Caco-2 (cell line): ENCODE measurements at regions of chr6 and their contacts with region 1.

Region 1: DNA sequence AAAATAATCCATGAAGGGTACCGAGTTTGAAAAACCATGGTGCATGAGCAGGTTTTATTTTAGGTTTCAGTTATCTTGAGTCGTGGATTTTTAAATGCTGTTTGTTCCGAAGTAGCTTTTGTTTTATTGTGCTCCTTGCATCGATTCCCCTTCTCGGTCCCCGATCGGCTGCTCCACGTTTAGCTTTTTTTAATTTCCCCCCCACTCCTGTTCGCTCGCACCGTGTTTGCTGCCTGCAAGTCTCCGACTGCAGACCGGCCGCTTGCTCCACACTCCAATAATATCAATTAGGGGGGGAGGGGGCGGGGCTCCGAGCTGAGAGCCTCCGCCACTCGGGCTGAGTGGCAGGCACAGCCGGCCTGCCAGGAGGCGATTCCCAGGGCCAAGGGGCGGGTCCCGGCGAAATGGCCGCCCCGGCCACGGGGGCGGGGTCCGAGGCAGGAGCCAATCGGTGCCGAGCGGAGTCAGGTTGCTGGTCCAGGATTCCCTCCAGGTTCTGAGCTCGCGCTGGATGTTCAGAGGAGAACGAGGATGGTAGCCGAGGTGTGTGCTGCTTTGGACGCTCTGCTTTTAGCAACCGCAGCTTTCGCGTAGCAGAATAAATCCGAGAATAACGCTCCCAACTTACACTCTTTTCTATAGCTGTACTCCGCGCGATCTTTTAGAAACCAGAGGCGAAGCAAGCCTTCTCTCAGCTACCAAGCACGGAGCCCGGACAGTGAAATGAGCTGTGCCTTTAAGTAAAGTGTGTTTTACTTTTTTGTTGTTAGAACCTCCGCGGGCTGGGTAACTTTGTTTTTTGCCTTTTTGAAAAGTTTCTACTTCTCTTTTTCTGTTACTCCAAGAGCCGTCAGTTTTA is at the start of gene EPHA7:
- DNase-seq: peak; percentile 87 to 91
- H3K4me3 ChIP-seq: peak within 1 kb of the TSS; percentile 30
- H3K4me3 Mint-ChIP-seq: peak within 1 kb of the TSS; percentile 72
- H3K27ac Mint-ChIP-seq: no peak within 1 kb of the TSS
- H3K4me1 ChIP-seq: peaks cover 18% of the 10 kb centered on the region
- H3K4me1 Mint-ChIP-seq: peaks cover 7% of the 10 kb centered on the region
- H3K27me3 ChIP-seq: peaks cover 3% of the 10 kb centered on the region
- H3K27me3 Mint-ChIP-seq: peaks cover 15% of the 10 kb centered on the region
- CTCF ChIP-seq: no peak
- total RNA-seq, gene EPHA7: not detected in 2 replicates

Region 2: DNA sequence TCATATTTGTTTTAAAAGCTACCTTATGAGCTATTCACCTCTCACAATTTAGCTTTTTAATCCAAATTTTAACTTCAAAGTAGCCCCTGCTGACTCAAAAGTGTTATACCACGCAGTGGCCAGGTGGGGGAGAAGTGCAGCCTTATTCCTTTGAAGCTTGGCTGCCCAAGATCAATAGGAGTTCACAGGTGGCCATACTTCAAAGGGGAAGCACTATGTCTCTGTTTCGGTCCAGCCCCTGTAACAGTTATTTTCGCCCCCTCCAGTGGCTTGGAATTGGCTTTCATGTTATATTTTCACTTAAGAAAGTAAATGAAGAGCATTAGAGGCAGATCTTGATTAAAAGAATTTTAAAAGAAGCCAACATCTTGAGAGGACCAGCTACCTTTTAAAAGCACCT is 608.6 kb before region 1 on chr6:
- CTCF ChIA-PET with region 1: interaction called, 4 read pairs
- POLR2A ChIA-PET with region 1: no interaction called
- intact Hi-C with region 1: loop called (anchors 1 kb)
- DNase-seq: peak; percentile 39 to 59
- H3K4me3 ChIP-seq: no peak overlapping the region
- H3K4me3 Mint-ChIP-seq: no peak overlapping the region
- H3K27ac Mint-ChIP-seq: no peak overlapping the region
- H3K4me1 ChIP-seq: no peaks in the 10 kb centered on the region
- H3K4me1 Mint-ChIP-seq: no peaks in the 10 kb centered on the region
- H3K27me3 ChIP-seq: no peaks in the 10 kb centered on the region
- H3K27me3 Mint-ChIP-seq: no peaks in the 10 kb centered on the region
- CTCF ChIP-seq: peak; percentile 50 to 53

Region 3: DNA sequence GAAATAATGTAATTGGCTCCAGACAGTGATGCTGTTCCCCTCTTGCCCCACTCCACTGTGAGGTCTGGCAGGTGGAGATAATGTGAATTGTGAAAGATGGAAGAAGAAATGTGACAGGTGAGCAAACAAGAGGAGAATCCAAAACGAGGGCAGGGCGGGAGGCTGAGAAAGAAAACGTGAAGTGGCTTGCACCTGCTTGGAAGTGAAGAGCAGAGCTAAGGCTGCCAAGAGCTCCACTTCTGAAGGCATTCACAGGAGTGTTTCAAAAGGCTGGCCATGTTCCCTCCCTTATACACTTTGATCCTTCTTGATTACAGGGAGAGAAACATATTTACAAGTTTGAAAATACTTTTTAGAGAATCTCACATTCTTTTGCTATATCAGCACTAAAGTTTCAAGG is 359.6 kb before region 1 on chr6:
- CTCF ChIA-PET with region 1: no interaction called
- POLR2A ChIA-PET with region 1: no interaction called
- intact Hi-C with region 1: loop called (anchors 10 kb)
- DNase-seq: no peak
- H3K4me3 ChIP-seq: no peak overlapping the region
- H3K4me3 Mint-ChIP-seq: no peak overlapping the region
- H3K27ac Mint-ChIP-seq: no peak overlapping the region
- H3K4me1 ChIP-seq: no peaks in the 10 kb centered on the region
- H3K4me1 Mint-ChIP-seq: no peaks in the 10 kb centered on the region
- H3K27me3 ChIP-seq: no peaks in the 10 kb centered on the region
- H3K27me3 Mint-ChIP-seq: peaks cover 5% of the 10 kb centered on the region
- CTCF ChIP-seq: no peak

Region 4: GRCh38 chr6:93366506-93366905 is 53.0 kb before region 1 on chr6:
- CTCF ChIA-PET with region 1: no interaction called
- POLR2A ChIA-PET with region 1: no interaction called
- intact Hi-C with region 1: no loop called
- DNase-seq: no peak
- H3K4me3 ChIP-seq: no peak overlapping the region
- H3K4me3 Mint-ChIP-seq: no peak overlapping the region
- H3K27ac Mint-ChIP-seq: no peak overlapping the region
- H3K4me1 ChIP-seq: no peaks in the 10 kb centered on the region
- H3K4me1 Mint-ChIP-seq: no peaks in the 10 kb centered on the region
- H3K27me3 ChIP-seq: no peaks in the 10 kb centered on the region
- H3K27me3 Mint-ChIP-seq: no peaks in the 10 kb centered on the region
- CTCF ChIP-seq: no peak

Region 5: GRCh38 chr6:93799226-93799625 is 379.7 kb after region 1 on chr6:
- CTCF ChIA-PET with region 1: no interaction called
- POLR2A ChIA-PET with region 1: no interaction called
- intact Hi-C with region 1: no loop called
- DNase-seq: no peak
- H3K4me3 ChIP-seq: no peak overlapping the region
- H3K4me3 Mint-ChIP-seq: no peak overlapping the region
- H3K27ac Mint-ChIP-seq: no peak overlapping the region
- H3K4me1 ChIP-seq: no peaks in the 10 kb centered on the region
- H3K4me1 Mint-ChIP-seq: no peaks in the 10 kb centered on the region
- H3K27me3 ChIP-seq: no peaks in the 10 kb centered on the region
- H3K27me3 Mint-ChIP-seq: no peaks in the 10 kb centered on the region
- CTCF ChIP-seq: no peak